ENCODE measurements at regions of chr6 and their contacts with region 1.

Region 1: GRCh38 chr6:109187399-109188114 is 92.2 kb downstream of the CEP57L1 start:
- DNase-seq: peak; percentile 39
- H3K4me3 ChIP-seq: no peak overlapping the region
- H3K27ac ChIP-seq: no peak overlapping the region
- H3K4me1 ChIP-seq: no peaks in the 10 kb centered on the region
- H3K27me3 ChIP-seq: no peaks in the 10 kb centered on the region
- CTCF ChIP-seq: peak; percentile 31 to 92 (median 76)
- POLR2A ChIP-seq: no peak

Region 2: GRCh38 chr6:109299776-109300564 is 112.4 kb after region 1 on chr6:
- intact Hi-C with region 1: loop called (anchors 2 kb)
- DNase-seq: peak; percentile 24
- H3K4me3 ChIP-seq: no peak overlapping the region
- H3K27ac ChIP-seq: peak overlapping the region; percentile 31 to 33
- H3K4me1 ChIP-seq: no peaks in the 10 kb centered on the region
- H3K27me3 ChIP-seq: no peaks in the 10 kb centered on the region
- CTCF ChIP-seq: no peak
- POLR2A ChIP-seq: no peak